Activated CD4-positive, alpha-beta T cell treated with anti-CD3 and anti-CD28 coated beads for 36 hours (primary cell): ENCODE measurements at regions of chr9 and their contacts with region 1.

Region 1: GRCh38 chr9:126558051-126558665 is 55.6 kb upstream of the LMX1B start:
- DNase-seq: peak; percentile 81
- ATAC-seq: peak; percentile 77
- H3K4me3 Mint-ChIP-seq: no peak overlapping the region
- H3K27ac Mint-ChIP-seq: no peak overlapping the region
- H3K4me1 Mint-ChIP-seq: no peaks in the 10 kb centered on the region
- H3K27me3 Mint-ChIP-seq: peaks cover 25% of the 10 kb centered on the region

Region 2: DNA sequence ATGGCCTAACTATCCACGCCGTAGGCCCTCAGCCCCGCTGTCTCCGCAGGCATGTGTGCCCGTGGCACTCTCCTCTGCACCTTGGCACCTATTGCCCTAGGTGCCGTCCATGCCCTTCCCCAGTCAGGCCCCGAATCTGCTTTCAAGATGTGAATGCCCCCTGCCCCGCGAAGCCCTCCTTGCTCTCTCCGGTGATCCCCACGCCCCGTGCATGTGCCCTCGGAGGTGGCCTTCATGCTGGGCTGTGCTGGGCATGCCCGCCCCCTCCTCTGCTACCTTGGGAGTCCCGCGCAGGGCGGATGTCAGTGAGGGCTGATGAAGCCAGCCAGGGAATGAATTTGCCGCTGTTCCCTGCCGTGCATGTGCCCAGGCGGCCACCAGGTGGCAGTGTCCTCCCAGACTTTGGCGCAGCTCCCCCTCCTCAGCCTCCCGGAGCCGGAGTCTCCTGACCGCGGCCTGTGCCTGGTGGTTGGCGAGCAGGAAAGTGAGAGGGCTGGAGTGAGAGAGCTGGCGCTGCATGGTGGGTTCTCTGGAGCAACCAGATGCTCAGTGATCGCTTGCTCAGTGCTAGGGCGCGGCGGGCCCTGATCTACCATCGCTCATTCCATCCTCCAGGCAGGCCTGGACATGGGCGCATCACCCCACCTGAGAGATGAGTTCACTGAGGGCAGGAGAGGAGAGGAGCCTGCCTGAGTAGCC is 57.3 kb before region 1 on chr9:
- CTCF ChIA-PET with region 1: interaction called, 140 read pairs
- POLR2A ChIA-PET with region 1: no interaction called
- intact Hi-C with region 1: loop called (anchors 1 kb)
- DNase-seq: peak; percentile 83
- ATAC-seq: peak; percentile 87
- H3K4me3 Mint-ChIP-seq: no peak overlapping the region
- H3K27ac Mint-ChIP-seq: no peak overlapping the region
- H3K4me1 Mint-ChIP-seq: peaks cover 5% of the 10 kb centered on the region
- H3K27me3 Mint-ChIP-seq: peaks cover 8% of the 10 kb centered on the region

Region 3: DNA sequence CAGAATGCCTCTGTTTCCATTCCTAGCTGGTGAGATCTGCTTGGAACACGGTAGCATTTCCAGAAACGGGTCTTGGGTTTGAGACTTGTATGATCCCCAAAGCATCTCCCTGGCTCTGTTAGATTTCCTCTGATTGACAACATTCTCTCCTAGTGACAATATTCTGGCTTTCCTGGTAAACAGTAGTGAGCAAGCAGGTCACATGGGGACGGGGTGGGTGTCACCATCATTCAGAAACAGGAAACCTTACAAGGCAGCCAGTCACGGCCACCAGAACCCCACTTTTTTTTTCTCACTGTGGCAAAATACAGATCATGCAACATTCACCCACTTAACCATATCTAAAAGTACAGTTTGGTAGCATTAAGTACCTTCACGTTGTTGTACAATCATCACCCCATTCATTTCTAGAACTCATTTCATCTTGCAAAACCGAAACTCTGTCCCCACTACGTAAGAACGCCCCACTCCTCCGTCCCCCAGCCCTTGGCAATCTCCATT is 34.5 kb before region 1 on chr9:
- CTCF ChIA-PET with region 1: interaction called, 11 read pairs
- POLR2A ChIA-PET with region 1: no interaction called
- intact Hi-C with region 1: loop called in 1 of 2 experiments (anchors 5 kb)
- DNase-seq: peak; percentile 71
- ATAC-seq: peak; percentile 81
- H3K4me3 Mint-ChIP-seq: peak overlapping the region; percentile 3
- H3K27ac Mint-ChIP-seq: peak overlapping the region; percentile 53
- H3K4me1 Mint-ChIP-seq: peaks cover 32% of the 10 kb centered on the region
- H3K27me3 Mint-ChIP-seq: peaks cover 31% of the 10 kb centered on the region